ENCODE measurements at regions of chr1 and their contacts with region 1.

Region 1: DNA sequence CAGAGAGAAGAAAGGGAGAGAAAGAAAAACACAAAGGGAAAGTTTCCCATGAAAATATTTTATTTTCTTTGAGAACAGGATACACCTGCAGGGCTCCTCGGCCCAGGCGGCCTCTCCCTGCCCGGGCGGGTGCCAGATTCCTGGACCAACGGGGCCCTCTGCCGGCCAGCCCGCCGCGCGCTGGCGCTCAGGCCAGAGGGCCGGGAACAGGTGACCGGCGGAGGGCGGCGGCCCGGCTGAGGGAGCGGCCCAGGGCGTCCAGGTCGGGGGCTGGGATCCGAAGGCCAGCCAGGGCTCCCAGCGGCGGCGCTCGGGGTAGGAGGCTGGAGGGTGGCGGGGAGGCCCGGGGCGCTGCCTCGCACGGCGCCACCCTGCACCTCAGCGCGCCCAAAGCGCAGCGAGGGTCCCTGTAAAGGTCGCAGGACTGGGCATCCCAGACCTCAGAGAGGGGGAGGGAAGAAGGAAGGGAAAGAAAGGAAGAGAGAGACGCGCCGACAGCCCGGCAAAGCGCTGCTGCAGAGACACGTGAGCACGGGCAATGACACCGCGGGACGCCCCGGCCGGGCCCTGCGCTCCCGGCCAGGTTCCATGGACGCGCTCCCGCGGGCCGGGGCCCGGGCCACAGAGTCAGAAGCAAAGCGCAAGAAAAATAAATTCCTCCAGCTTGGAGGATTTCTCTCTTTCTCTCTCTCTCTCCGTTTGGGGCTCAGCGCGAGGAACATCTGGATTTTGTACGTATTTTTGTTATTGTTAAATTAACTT is 927 bp downstream of the WNT9A start:
- DNase-seq: no peak
- H3K4me3 ChIP-seq: peak overlapping the region; percentile 52
- CTCF ChIP-seq: peak; percentile 66

Region 2: GRCh38 chr1:227762233-227762911 is 184.4 kb before region 1 on chr1:
- in situ Hi-C with region 1: loop called (anchors 25 kb)
- DNase-seq: no peak
- H3K4me3 ChIP-seq: no peak overlapping the region
- CTCF ChIP-seq: peak; percentile 84